Activated CD4-positive, alpha-beta memory T cell treated with anti-CD3 and anti-CD28 coated beads for 36 hours (primary cell): ENCODE measurements at regions of chr3 and their contacts with region 1.

Region 1: DNA sequence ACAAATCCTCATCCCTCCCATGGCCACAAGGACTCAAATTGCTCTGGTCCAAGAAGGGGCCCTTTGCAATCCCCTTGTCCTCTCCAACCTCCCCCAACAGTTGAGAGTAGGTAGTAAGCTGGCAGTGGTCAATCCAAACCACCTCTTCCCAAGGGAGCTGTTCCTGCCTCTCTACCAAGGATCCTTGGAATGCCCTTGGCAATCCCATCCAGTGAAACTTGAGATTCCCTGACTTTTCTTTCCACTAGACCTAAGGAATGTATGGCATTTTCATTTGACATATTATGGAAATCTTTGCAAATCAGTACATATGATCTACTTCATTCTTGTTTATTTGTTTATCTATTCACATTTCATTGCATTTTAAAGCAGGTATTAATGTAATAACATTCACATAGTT is 4.8 kb upstream of the RBP2 start:
- DNase-seq: no peak
- H3K4me3 Mint-ChIP-seq: no peak overlapping the region
- H3K27ac Mint-ChIP-seq: no peak overlapping the region
- H3K4me1 Mint-ChIP-seq: no peaks in the 10 kb centered on the region
- H3K27me3 Mint-ChIP-seq: no peaks in the 10 kb centered on the region

Region 2: DNA sequence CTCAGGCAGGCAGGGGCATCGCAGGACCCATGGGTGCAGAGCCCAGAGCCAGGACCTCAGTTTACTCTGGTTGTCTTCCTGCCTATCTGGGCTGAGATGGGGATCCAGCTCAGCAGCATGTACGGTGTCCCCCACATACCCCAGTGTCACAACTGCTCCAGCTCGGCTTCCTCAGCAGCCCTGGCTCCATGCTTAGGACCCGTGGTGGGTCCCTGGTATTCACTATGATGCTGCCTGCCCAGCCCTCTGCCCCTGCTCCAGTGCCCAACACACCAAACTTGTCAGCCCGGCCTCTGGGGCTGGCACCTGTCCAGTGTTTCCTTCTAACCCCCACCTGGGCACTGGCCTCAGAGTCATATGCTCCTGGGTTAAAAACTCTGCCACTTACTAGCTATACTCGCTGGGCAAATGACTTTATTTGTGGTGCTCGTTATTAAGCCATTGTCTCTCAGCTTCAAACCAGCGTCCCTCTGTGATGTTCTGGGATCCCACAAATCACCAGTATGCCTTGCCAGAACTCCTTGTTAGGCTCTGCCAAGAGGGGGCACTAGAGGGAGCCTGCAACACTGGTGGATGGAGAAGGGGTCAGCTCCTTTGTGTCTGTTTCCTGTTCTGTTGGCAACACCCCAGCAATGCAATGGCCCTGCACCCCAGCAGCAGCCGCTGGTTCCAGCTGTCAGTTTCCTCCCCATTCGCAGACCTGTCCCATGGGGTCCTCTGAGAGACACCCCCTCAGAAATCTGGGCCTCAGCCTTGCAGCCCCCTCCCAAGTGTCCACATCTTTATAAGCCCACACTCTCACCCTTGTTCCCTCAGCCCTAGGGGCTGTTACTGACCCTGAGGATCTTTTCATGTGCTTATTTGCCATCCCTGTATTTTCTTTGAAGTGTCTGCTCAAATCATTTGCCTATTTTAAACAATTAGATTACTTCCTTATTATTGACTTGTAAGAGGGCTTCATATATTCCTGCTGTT is 161.4 kb before region 1 on chr3:
- CTCF ChIA-PET with region 1: no interaction called
- POLR2A ChIA-PET with region 1: no interaction called
- intact Hi-C with region 1: no loop called
- DNase-seq: peak; percentile 15
- H3K4me3 Mint-ChIP-seq: no peak overlapping the region
- H3K27ac Mint-ChIP-seq: no peak overlapping the region
- H3K4me1 Mint-ChIP-seq: no peaks in the 10 kb centered on the region
- H3K27me3 Mint-ChIP-seq: peaks cover 4% of the 10 kb centered on the region

Region 3: GRCh38 chr3:139588450-139588849 is 107.3 kb after region 1 on chr3:
- CTCF ChIA-PET with region 1: no interaction called
- POLR2A ChIA-PET with region 1: no interaction called
- intact Hi-C with region 1: no loop called
- DNase-seq: no peak
- H3K4me3 Mint-ChIP-seq: no peak overlapping the region
- H3K27ac Mint-ChIP-seq: no peak overlapping the region
- H3K4me1 Mint-ChIP-seq: no peaks in the 10 kb centered on the region
- H3K27me3 Mint-ChIP-seq: no peaks in the 10 kb centered on the region

Region 4: DNA sequence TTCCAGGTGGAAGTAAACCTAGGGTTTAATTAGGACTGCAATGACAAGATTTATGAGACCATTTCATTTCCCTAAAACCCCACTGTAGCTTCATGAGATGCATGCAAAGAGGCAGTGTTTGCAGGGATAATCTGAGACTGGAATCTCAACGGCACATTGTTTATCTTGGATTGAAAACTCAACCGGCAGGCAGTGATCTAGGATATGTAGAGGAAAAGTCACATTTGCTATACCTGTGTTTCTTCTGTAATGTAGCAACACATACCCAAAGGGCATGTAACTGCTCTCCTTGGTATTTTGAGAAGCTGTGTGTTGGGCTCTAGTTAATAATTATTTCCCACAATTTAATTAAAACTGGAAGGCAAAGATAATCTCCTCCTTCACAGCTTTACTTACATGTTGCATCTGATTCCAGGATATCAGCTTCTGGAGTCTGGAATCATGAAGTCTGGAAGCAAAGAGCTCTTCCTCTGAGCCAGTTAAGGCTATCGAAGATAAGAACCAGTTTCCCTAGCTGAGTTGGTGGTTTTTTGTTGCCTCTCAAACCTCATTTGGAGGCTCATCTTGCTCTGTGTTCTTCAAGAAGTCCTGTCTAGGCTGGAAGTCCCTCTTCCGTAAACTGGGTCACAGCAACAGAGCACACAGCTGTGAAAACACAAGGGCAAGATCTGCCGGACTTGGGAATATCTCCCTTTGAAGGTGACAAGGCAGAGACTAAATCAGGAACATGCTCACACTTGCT is 435.4 kb after region 1 on chr3:
- CTCF ChIA-PET with region 1: no interaction called
- POLR2A ChIA-PET with region 1: no interaction called
- intact Hi-C with region 1: loop called (anchors 5 kb)
- DNase-seq: no peak
- H3K4me3 Mint-ChIP-seq: no peak overlapping the region
- H3K27ac Mint-ChIP-seq: no peak overlapping the region
- H3K4me1 Mint-ChIP-seq: no peaks in the 10 kb centered on the region
- H3K27me3 Mint-ChIP-seq: no peaks in the 10 kb centered on the region